Left cardiac atrium (tissue), 4 donors: ENCODE measurements at regions of chr6 and their contacts with region 1.

Region 1: GRCh38 chr6:15254070-15254841 is 8.4 kb downstream of the JARID2 start:
- DNase-seq: no peak
- ATAC-seq: peak in 1 of 2 donors; percentile 6

Region 2: DNA sequence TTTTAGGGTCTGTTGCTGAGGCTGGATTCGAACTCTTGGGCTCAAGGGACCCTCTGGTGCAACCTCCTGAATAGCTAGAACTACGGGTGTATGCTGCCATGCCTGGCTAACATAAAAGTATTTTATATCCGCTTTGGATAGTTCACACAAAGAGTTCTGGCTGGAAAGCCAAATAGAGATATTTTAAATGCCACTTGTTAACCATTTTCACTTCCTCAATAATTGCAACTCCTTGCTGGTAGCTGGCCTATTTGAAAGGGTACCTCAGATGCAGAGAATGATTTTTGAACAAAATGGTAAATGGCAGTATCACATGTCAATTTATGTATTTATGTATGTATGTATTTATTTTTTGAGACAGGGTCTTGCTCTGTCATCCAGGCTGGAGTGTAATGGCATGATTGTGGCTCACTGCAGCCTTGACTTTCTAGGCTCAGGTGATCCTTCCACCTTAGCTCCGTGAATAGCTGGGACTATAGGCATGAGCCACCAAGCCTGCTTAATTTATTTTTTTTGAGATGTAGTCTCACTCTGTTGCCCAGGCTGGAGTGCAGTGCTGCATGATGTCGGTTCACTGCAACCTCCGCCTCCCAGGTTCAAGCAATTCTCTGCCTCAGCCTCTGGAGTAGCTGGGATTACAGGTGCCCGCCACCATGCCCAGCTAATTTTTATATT is 21.3 kb before region 1 on chr6:
- intact Hi-C with region 1: no loop called
- DNase-seq: no peak
- ATAC-seq: no peak

Region 3: GRCh38 chr6:15312500-15312899 is 58.2 kb after region 1 on chr6:
- intact Hi-C with region 1: loop called in 1 of 2 experiments (anchors 10 kb)
- DNase-seq: no peak
- ATAC-seq: peak in 1 of 2 donors; percentile 29

Region 4: DNA sequence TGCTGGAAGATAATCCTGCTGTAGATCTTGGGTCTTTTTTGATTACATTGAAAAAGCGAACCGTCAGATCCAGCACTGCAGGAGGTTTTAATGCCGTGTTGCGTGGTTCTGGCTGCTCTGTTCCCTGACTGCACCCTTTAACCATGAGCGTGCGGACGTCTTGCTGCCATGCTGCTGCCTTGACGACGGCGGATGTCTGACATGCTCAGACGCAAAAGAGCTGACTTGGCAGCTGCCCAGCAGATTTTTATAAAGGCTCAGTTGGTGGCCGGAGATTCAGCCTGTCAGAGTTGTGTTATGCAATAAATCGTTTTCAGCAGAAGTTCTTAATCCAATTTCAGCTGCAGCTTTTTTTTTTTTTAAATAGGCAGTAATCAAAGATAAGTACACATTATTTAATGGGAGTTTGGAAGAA is 111.0 kb after region 1 on chr6:
- intact Hi-C with region 1: loop called in 1 of 2 experiments (anchors 10 kb)
- DNase-seq: peak; percentile 91
- ATAC-seq: peak; percentile 84 to 85

Region 5: GRCh38 chr6:15441215-15441868 is 187.1 kb after region 1 on chr6:
- intact Hi-C with region 1: loop called (anchors 5 kb)
- DNase-seq: no peak
- ATAC-seq: peak; percentile 74 to 77

Region 6: GRCh38 chr6:15491255-15491985 is 237.2 kb after region 1 on chr6:
- intact Hi-C with region 1: loop called in 1 of 2 experiments (anchors 5 kb)
- DNase-seq: peak; percentile 77
- ATAC-seq: peak; percentile 73 to 74